Prostate gland (tissue), 2 donors: ENCODE measurements at regions of chr15 and their contacts with region 1.

Region 1: DNA sequence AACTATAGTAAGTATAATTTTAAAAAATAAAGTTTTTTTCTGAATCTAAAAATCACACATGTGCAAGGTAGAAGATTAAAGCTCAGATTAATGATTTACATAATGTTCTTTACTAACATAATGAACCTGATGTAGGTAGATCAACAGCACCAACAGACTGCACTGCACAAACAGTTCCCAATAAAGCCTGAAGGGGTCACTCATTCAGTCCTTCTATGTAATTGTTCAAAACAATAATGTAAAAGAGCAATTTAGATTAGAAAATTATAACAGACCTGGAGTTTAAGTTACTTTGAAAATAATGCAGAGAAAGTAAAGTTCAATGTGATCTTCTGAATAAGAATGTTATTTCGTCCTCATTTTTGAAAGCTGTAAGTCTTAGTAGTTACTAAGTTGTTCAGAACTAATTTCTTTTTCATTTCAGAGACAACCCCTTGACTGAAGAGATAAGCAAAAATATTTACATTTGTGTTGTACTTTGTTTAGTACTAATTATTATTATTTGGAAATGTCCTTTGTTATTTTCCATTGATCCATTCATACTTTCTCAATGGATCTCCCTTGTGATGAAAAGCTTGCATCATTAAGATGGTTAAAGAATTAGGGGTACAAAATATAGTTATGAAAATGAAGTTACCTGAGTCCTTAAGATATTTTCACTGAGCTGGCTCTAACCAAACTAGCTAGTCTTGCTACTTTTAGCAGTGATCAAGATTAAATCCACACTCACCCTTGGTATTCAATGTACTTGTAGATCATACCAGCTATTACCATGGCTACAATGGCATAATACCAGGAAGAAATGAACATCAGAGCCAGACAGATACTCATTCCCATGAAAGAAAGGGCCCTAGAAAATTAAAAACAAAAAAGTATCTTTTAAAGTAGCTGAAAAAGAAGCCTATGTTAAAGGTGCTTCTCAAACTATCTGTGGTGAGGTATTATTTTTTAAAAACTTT is 16.8 kb downstream of the EMC4 start:
- DNase-seq: no peak
- H3K4me3 ChIP-seq: no peak overlapping the region
- H3K27ac ChIP-seq: no peak overlapping the region
- H3K4me1 ChIP-seq: no peaks in the 10 kb centered on the region
- H3K27me3 ChIP-seq: no peaks in the 10 kb centered on the region
- CTCF ChIP-seq: peak in 3 of 4 experiments; percentile 33 to 70 (median 65)
- POLR2A ChIP-seq: no peak

Region 2: GRCh38 chr15:34367101-34368081 is 125.7 kb after region 1 on chr15 and contains the start of gene LPCAT4:
- intact Hi-C with region 1: loop called (anchors 2 kb)
- DNase-seq: peak; percentile 87
- H3K4me3 ChIP-seq: peak within 1 kb of the TSS; percentile 84 to 88
- H3K27ac ChIP-seq: peak within 1 kb of the TSS; percentile 95 to 99
- H3K4me1 ChIP-seq: no peaks in the 10 kb centered on the region
- H3K27me3 ChIP-seq: no peaks in the 10 kb centered on the region
- CTCF ChIP-seq: peak; percentile 90 to 96 (median 92)
- POLR2A ChIP-seq: peak; percentile 77
- total RNA-seq, gene LPCAT4: 12.5 to 13.1 TPM